ENCODE measurements at regions of chr10 and their contacts with region 1.

Region 1: DNA sequence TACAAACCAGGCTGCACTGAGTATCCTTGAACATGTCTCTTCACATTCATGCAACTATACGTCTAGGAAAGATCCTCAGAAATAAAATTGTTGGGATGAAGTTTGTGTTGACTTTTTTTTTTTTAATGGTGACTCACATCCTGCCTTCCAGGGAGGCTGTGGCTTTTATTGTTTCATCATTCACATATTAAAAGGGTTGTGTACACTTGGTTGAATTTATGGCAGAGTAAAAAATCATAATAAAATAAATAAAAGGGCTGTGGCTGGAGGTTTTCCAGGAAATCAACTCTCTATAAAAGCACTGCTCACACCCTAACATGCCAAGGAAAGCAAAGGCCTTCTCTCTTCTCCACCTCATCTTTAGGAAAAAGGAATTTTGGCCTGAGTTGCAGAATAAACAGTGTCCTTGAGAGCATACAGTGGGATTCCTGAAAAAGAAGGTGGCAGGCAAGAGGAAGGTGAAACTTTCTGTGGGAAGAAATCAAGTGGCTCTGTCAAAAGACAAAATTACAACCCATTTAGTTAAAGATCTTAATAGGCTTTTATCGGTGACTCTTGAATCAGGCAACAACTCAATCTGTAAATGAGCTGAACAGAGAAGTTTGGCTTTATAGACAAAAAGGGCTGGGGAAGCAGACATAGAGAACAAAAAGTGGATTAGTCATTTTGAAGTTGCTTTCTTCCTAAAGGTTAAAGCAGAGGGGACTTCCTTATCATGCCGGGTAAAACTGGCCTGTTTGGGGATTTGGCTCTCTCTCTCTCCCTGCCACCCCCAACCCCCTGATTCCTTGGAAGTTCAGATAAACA is 41.6 kb upstream of the FHIP2A start:
- DNase-seq: no peak
- H3K4me3 ChIP-seq: no peak overlapping the region
- H3K27ac ChIP-seq: peak overlapping the region in 1 of 2 donors; percentile 3
- H3K4me1 ChIP-seq: peaks cover 0 to 4% of the 10 kb centered on the region in 2 donors
- H3K27me3 ChIP-seq: no peaks in the 10 kb centered on the region
- CTCF ChIP-seq: no peak

Region 2: GRCh38 chr10:114708717-114709335 is 71.2 kb before region 1 on chr10:
- intact Hi-C with region 1: loop called (anchors 5 kb)
- DNase-seq: no peak
- H3K4me3 ChIP-seq: no peak overlapping the region
- H3K27ac ChIP-seq: no peak overlapping the region
- H3K4me1 ChIP-seq: peaks cover 0 to 4% of the 10 kb centered on the region in 2 donors
- H3K27me3 ChIP-seq: no peaks in the 10 kb centered on the region
- CTCF ChIP-seq: no peak